Right cardiac atrium (tissue), 5 donors: ENCODE measurements at regions of chr7 and their contacts with region 1.

Region 1: GRCh38 chr7:14197280-14197679 is 207.8 kb upstream of the ETV1 start:
- DNase-seq: no peak
- ATAC-seq: peak; percentile 53 to 74
- H3K4me3 ChIP-seq: no peak overlapping the region
- H3K27ac ChIP-seq: no peak overlapping the region
- H3K4me1 ChIP-seq: no peaks in the 10 kb centered on the region
- H3K27me3 ChIP-seq: no peaks in the 10 kb centered on the region

Region 2: GRCh38 chr7:14219125-14219524 is 21.8 kb after region 1 on chr7:
- intact Hi-C with region 1: no loop called
- DNase-seq: no peak
- ATAC-seq: peak; percentile 50 to 81
- H3K4me3 ChIP-seq: no peak overlapping the region
- H3K27ac ChIP-seq: no peak overlapping the region
- H3K4me1 ChIP-seq: no peaks in the 10 kb centered on the region
- H3K27me3 ChIP-seq: no peaks in the 10 kb centered on the region

Region 3: GRCh38 chr7:14258441-14258840 is 61.2 kb after region 1 on chr7:
- intact Hi-C with region 1: loop called in 1 of 4 experiments (anchors 10 kb)
- DNase-seq: no peak
- ATAC-seq: no peak
- H3K4me3 ChIP-seq: no peak overlapping the region
- H3K27ac ChIP-seq: no peak overlapping the region
- H3K4me1 ChIP-seq: no peaks in the 10 kb centered on the region
- H3K27me3 ChIP-seq: no peaks in the 10 kb centered on the region